Posterior vena cava (tissue), 2 donors: ENCODE measurements at regions of chr2 and their contacts with region 1.

Region 1: DNA sequence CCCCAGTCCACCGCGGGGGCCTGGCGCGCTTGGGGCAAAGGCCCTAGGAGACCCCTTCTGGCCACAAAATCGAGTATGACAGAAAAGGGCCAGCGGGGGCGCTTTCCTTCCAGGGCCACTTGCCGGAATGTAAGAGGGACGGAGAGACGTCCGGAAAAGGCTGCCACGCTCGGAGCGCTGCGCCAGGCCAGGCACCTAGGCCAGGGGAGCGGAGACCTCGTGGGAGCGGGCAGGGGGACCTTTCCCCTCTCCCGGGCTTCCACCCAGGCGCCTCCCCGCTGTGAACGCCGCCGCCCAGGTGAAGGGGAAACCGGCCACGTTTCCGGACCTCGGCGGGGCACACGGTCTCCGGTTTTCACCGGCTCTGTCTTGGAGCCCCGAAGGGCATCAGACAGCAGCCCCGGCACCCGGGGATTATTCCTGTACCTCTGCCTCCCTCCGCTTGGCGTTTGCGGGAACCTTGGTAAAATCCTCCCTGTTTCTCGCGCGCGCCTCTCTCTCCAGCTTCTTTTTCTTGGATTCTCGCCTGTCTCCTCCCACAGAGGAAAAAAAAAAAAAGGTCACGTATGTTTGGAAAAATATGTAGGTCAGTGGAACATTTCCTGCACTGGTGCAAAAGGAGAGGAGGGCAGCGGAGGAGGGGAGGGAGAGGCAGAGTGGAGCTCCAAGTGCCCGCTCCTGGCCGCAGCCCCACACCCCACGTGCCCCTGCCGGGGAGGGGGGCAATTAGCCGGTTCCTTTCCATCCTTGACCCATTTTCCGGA is 1.2 kb upstream of the NPAS2 start:
- DNase-seq: peak; percentile 87

Region 2: DNA sequence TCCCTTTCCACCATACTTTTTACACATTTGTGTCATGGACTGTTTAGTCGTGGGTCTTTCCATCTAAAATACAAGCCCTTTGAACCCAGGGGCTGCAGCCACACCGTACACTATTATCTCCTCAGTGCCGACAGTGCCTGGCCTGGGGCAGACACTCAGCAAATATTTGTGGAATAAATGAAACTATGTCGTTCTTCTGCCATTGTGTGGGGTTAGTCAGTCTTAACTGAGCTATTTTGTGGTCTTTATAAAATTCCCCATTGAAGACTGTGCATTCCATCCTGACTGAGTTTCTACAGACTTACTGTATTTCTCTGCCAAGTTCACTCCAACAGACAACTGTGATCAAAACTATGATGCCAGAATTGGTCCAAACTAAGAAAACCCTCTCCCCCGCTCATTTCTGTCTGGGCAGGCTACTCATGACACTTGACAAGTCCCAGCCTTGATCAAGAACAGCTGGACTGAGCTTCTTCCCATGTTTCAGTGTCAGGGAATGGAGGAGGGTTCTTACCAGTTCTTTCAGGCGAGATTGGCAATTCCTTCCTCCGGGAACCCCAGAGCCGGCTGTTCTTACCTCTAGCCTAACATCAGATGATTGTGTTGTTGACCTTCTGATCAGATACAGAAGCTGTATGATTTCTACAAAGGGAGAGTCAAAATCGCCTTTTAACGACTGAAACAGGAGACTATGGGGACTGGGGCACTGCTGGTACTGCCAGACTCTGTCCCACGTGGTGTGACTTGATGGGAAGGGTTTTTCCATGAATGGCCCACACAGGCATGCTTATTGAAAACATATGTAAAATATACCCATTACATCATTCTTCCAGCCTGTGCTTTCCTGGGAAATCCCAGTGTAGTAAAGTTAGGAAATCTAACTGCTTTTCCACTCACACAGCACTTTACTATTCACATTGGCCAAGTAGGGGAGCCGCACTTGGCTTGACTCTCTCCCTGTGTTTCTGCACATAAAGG is 76.2 kb before region 1 on chr2:
- intact Hi-C with region 1: loop called (anchors 5 kb)
- DNase-seq: no peak

Region 3: GRCh38 chr2:100767224-100767653 is 51.5 kb before region 1 on chr2:
- intact Hi-C with region 1: loop called (anchors 5 to 10 kb)
- DNase-seq: no peak

Region 4: GRCh38 chr2:100870652-100871531 is 52.1 kb after region 1 on chr2:
- intact Hi-C with region 1: loop called in 1 of 2 experiments (anchors 10 kb)
- DNase-seq: no peak